ENCODE measurements at regions of chr14 and their contacts with region 1.

Region 1: GRCh38 chr14:80996049-80996901 is 40.9 kb downstream of the TSHR start:
- DNase-seq: peak; percentile 66
- H3K27ac ChIP-seq: no peak overlapping the region
- CTCF ChIP-seq: peak; percentile 69

Region 2: GRCh38 chr14:80872645-80873044 is 123.6 kb before region 1 on chr14:
- CTCF ChIA-PET with region 1: no interaction called
- POLR2A ChIA-PET with region 1: no interaction called
- DNase-seq: no peak
- H3K27ac ChIP-seq: no peak overlapping the region
- CTCF ChIP-seq: no peak

Region 3: DNA sequence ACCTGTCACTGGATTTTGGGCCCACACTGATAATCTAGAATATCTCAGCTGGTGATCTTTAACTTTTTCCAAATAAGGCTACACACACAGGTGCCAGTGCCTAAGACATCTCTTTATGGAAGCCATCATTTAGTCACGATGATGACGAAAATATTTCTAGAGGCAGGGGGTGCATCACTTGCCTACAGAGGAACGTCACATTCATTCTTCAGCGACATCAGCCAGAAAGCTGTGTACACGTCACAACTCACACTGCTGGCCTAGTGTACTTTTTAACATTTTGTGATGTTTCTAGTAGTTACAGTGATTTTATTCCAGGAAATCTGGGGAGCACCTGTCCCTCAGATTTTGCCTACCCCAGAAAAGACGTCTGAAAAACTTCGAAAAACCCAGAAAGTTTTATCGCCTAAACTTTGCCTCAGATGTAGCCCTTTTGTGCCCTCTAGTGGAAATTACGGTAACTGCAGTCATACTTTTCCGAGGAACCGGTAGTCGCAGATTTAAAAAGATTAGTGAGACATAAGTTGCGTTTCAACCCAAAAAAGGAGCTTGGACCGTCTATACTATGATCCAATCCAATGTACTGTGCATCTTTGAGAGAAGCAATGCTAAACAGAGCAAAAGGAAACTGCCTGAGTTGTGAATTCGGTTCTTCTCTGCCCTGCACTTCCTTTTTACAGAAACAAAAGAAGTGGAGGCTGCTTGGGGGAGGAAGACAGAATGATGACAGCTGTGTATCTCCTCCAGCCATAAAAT is 468.1 kb after region 1 on chr14:
- CTCF ChIA-PET with region 1: interaction called, 10 read pairs
- POLR2A ChIA-PET with region 1: no interaction called
- DNase-seq: peak; percentile 47
- H3K27ac ChIP-seq: no peak overlapping the region
- CTCF ChIP-seq: peak; percentile 90

Measured in RWPE1 (cell line).